ENCODE measurements at regions of chr5 and their contacts with region 1.

Region 1: GRCh38 chr5:181223058-181223728 is at the start of gene TRIM41:
- DNase-seq: peak; percentile 95 to 99 (median 98)
- H3K4me3 ChIP-seq: peak within 1 kb of the TSS; percentile 85
- H3K4me3 Mint-ChIP-seq: peak within 1 kb of the TSS; percentile 88 to 99 (median 92)
- H3K27ac ChIP-seq: peak within 1 kb of the TSS; percentile 91
- H3K27ac Mint-ChIP-seq: peak within 1 kb of the TSS; percentile 91 to 100 (median 100)
- H3K4me1 ChIP-seq: peaks cover 54% of the 10 kb centered on the region
- H3K4me1 Mint-ChIP-seq: peaks cover 56 to 75% (median 58%) of the 10 kb centered on the region in 3 donors
- H3K27me3 ChIP-seq: no peaks in the 10 kb centered on the region
- H3K27me3 Mint-ChIP-seq: peaks cover 1 to 21% of the 10 kb centered on the region in 2 donors
- total RNA-seq, gene TRIM41: 35.2 to 42.7 TPM

Region 2: DNA sequence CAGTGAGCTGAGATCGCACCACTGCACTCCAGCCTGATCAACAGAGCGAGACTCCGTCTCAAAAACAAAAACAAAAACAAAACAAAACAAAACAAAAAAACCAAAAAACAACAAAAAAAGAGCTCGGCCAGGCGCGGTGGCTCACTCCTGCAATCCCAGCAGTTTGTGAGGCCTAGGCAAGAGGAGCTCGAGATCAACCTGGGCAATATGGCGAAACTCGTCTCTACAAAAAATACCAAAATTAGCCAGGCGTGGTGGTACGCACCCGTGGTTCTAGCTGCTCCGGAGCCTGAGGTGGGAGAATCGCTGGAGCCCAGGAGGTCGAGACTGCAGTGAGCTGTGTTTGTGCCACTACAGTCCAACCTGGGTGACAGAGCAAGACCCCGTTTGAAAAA is 38.3 kb before region 1 on chr5:
- CTCF ChIA-PET with region 1: interaction called, 40 read pairs
- POLR2A ChIA-PET with region 1: interaction called, 101 read pairs
- DNase-seq: no peak
- H3K4me3 ChIP-seq: no peak overlapping the region
- H3K4me3 Mint-ChIP-seq: peak overlapping the region; percentile 85 to 95 (median 91)
- H3K27ac ChIP-seq: peak overlapping the region; percentile 59
- H3K27ac Mint-ChIP-seq: peak overlapping the region in 6 of 8 donors; percentile 15 to 97 (median 90)
- H3K4me1 ChIP-seq: peaks cover 4% of the 10 kb centered on the region
- H3K4me1 Mint-ChIP-seq: peaks cover 43 to 58% (median 54%) of the 10 kb centered on the region in 3 donors
- H3K27me3 ChIP-seq: no peaks in the 10 kb centered on the region
- H3K27me3 Mint-ChIP-seq: peaks cover 0 to 26% of the 10 kb centered on the region in 2 donors

Region 3: GRCh38 chr5:181191529-181192394 is 31.4 kb before region 1 on chr5:
- CTCF ChIA-PET with region 1: interaction called, 40 read pairs
- POLR2A ChIA-PET with region 1: interaction called, 101 read pairs
- DNase-seq: peak; percentile 90 to 97 (median 95)
- H3K4me3 ChIP-seq: peak overlapping the region; percentile 100
- H3K4me3 Mint-ChIP-seq: peak overlapping the region; percentile 94 to 100 (median 97)
- H3K27ac ChIP-seq: peak overlapping the region; percentile 83
- H3K27ac Mint-ChIP-seq: peak overlapping the region; percentile 93 to 100 (median 97)
- H3K4me1 ChIP-seq: peaks cover 6% of the 10 kb centered on the region
- H3K4me1 Mint-ChIP-seq: peaks cover 27 to 47% (median 35%) of the 10 kb centered on the region in 3 donors
- H3K27me3 ChIP-seq: no peaks in the 10 kb centered on the region
- H3K27me3 Mint-ChIP-seq: peaks cover 0 to 36% of the 10 kb centered on the region in 2 donors

Region 4: GRCh38 chr5:181207214-181208107 is 15.7 kb before region 1 on chr5:
- CTCF ChIA-PET with region 1: interaction called, 13 read pairs
- POLR2A ChIA-PET with region 1: interaction called, 33 read pairs
- DNase-seq: peak; percentile 49 to 80 (median 77)
- H3K4me3 ChIP-seq: peak overlapping the region; percentile 69
- H3K4me3 Mint-ChIP-seq: peak overlapping the region; percentile 86 to 98 (median 91)
- H3K27ac ChIP-seq: peak overlapping the region; percentile 24
- H3K27ac Mint-ChIP-seq: peak overlapping the region; percentile 84 to 98 (median 94)
- H3K4me1 ChIP-seq: peaks cover 28% of the 10 kb centered on the region
- H3K4me1 Mint-ChIP-seq: peaks cover 30 to 38% (median 36%) of the 10 kb centered on the region in 3 donors
- H3K27me3 ChIP-seq: no peaks in the 10 kb centered on the region
- H3K27me3 Mint-ChIP-seq: peaks cover 6 to 24% of the 10 kb centered on the region in 2 donors

Region 5: GRCh38 chr5:181234455-181235306 is 11.5 kb after region 1 on chr5:
- CTCF ChIA-PET with region 1: interaction called, 7 read pairs
- POLR2A ChIA-PET with region 1: interaction called, 70 read pairs
- DNase-seq: no peak
- H3K4me3 ChIP-seq: no peak overlapping the region
- H3K4me3 Mint-ChIP-seq: no peak overlapping the region
- H3K27ac ChIP-seq: no peak overlapping the region
- H3K27ac Mint-ChIP-seq: peak overlapping the region in 6 of 8 donors; percentile 1 to 70 (median 62)
- H3K4me1 ChIP-seq: peaks cover 7% of the 10 kb centered on the region
- H3K4me1 Mint-ChIP-seq: peaks cover 21 to 31% (median 25%) of the 10 kb centered on the region in 3 donors
- H3K27me3 ChIP-seq: no peaks in the 10 kb centered on the region
- H3K27me3 Mint-ChIP-seq: peaks cover 0 to 2% of the 10 kb centered on the region in 2 donors

Region 6: DNA sequence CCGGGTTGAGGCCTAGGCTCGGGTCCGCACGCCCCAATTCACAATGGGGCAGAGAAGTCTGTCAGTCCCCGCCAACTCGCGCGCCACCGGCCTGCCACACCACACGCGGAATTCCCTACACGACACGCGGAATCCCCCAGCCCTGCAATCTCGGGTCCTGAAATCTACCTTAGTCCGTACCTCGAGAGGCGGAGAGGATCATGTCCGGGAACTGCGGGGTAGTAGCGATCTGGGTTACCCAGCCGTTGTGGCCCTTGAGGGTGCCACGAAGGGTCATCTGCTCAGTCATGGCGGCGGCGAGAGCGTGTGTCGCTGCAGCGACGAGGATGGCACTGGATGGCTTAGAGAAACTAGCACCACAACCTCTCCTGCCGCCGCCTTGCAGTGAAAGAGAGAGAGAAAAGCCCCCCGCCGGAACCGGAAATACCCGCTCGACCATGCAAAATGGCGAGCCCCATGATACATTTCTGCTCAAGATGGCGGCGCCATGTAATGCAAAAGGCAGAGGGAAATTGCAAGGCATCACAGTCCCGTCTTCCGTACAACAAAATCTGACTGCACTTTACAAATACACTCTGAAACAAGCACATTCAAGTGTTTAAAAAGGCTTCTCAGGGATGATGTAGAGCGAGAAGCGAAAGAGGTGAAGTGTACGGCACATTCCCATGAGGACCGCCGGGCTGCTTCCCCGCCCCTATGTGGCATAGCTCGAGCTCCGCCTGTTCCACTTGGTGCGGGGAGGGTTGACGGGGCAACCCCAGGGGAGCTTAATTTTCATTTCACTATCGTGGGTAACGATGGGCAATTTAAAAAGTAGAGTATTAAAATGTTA is 20.5 kb after region 1 on chr5 and contains the start of gene RACK1:
- CTCF ChIA-PET with region 1: interaction called, 6 read pairs
- POLR2A ChIA-PET with region 1: interaction called, 70 read pairs
- DNase-seq: peak; percentile 83 to 93 (median 87)
- H3K4me3 ChIP-seq: peak within 1 kb of the TSS; percentile 95
- H3K4me3 Mint-ChIP-seq: peak within 1 kb of the TSS; percentile 94 to 99 (median 97)
- H3K27ac ChIP-seq: peak within 1 kb of the TSS; percentile 96
- H3K27ac Mint-ChIP-seq: peak within 1 kb of the TSS; percentile 96 to 99 (median 98)
- H3K4me1 ChIP-seq: peaks cover 64% of the 10 kb centered on the region
- H3K4me1 Mint-ChIP-seq: peaks cover 68 to 76% (median 70%) of the 10 kb centered on the region in 3 donors
- H3K27me3 ChIP-seq: no peaks in the 10 kb centered on the region
- H3K27me3 Mint-ChIP-seq: peaks cover 0 to 2% of the 10 kb centered on the region in 2 donors
- total RNA-seq, gene RACK1: 2,341 to 2,398 TPM

Region 7: DNA sequence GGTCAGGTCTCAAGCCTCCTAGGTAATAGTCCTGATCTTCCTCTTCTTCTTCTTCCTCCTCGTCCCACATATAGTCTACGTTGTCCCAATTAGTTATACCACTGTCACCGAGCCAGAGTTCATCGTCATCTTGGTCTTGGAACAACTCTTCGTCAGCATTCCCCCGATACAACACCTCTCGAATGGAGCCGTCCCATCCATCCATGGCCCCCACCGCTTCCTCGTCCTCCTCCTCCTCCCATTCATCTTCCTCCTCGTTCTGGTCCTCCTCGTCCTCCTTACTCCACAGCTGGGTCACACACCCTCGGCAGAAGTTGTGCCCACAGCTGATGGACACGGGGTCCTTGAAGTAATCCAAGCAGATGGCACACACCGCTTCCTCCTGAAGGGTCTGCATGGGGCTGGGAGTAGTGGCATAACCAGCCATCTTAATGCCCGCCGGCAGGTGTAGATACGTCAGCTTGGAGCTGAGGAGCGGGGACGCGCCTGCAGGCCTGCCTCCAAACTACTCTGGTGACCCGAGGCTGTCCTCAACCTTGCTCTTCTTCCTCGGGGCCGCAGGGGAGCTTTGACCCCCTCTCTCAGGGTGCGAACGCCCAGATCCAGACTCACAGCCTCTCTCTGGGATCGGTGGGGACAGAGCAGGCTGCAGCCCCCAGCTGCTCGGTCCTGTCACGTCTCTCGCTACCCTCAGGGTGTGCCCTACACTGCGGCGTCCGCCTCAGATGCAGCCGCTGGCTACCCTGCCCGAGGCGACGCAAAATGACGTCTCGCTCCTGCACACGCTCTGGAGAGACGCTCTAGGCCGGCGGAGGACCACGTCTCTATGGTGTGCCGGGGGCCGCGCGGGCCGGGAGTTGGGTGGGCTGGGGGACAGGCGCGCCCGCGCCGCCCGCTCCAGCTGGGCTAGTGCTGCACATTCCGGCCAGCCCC is 37.5 kb after region 1 on chr5 and contains the start of gene TRIM52:
- CTCF ChIA-PET with region 1: interaction called, 39 read pairs
- POLR2A ChIA-PET with region 1: interaction called, 59 read pairs
- DNase-seq: peak; percentile 83 to 95 (median 91)
- H3K4me3 ChIP-seq: peak within 1 kb of the TSS; percentile 99
- H3K4me3 Mint-ChIP-seq: peak within 1 kb of the TSS; percentile 97 to 99 (median 98)
- H3K27ac ChIP-seq: peak within 1 kb of the TSS; percentile 99
- H3K27ac Mint-ChIP-seq: peak within 1 kb of the TSS; percentile 95 to 99 (median 98)
- H3K4me1 ChIP-seq: peaks cover 51% of the 10 kb centered on the region
- H3K4me1 Mint-ChIP-seq: peaks cover 52 to 59% (median 56%) of the 10 kb centered on the region in 3 donors
- H3K27me3 ChIP-seq: no peaks in the 10 kb centered on the region
- H3K27me3 Mint-ChIP-seq: no peaks in the 10 kb centered on the region
- total RNA-seq, gene TRIM52: 14.1 to 17.1 TPM